Mammary epithelial cell (primary cell): ENCODE measurements at regions of chr1 and their contacts with region 1.

Region 1: DNA sequence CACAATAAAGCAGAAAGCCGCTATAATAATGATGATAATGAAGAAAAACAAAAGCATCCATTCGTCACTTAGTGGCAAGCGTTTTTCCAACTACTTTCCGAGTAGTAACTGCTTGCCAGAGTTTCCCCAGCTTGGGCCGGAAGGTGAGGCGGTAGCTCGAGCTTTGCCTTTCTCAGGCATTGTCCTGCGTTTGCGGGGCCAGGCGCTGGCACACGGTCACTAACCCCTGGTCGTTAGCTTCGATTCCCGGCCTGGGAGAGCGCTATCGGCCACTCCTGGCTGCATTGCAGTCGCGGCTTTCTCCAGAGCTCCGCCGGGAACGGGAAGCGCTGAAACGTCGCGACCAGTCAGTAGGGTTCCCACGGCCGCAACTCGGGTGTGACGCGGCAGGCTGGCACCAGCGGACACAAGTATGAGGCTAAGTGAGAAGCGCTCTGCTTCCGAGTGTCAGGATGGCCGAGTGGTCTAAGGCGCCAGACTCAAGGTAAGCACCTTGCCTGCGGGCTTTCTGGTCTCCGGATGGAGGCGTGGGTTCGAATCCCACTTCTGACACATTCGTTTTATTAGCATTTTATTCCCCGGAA is 14.6 kb upstream of the ZNF692 start:
- DNase-seq: peak; percentile 95
- H3K4me3 ChIP-seq: peak overlapping the region; percentile 66 to 83 (median 73)
- H3K27ac ChIP-seq: peak overlapping the region; percentile 75
- H3K4me1 ChIP-seq: peaks cover 3% of the 10 kb centered on the region
- H3K27me3 ChIP-seq: no peaks in the 10 kb centered on the region
- CTCF ChIP-seq: peak in 1 of 2 donors; percentile 14

Region 2: DNA sequence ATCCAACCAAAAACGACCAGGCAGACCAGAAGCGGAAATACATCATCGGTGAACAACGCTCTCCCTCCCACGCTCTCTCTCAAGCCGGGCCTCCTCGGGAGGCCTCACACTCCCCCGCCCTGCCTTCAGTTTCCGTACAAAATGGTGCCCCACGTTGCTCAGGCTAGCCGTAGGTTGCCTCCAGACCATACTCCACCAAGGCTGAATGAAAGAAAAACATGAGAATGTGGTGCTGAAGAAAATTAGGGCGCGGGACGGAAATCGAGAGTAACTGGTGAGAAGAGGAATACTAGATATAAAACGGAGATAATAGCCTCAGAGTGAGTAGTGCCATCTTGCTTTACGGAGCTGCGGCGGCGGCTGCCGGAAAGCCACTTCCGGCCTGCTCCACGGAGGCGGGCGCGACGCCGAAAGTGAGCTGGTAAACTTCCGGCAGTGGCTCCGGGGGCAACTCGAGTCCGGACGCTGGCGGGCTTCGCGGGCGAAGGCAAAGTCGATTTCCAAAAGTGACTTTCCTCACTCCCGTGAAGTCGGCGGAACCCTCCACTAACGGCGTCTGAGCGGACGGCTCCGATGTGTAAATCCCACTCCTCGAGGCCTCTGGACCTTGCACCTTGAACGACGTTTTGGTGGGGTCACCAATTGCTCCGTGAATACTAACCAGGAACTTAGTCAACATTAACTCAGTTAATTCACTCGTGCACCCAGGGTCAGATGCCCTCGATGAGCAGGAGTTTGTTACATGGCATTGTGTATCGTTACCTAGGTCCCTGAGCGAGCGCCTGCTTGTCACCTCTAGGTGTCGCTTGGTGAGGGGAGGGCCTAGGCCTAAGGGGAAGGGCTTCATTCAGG is 47.4 kb before region 1 on chr1 and contains the start of gene SH3BP5L:
- CTCF ChIA-PET with region 1: no interaction called
- dilution Hi-C with region 1: no loop called
- in situ Hi-C with region 1: no loop called
- intact Hi-C with region 1: loop called (anchors 1 kb)
- DNase-seq: peak; percentile 93
- H3K4me3 ChIP-seq: peak within 1 kb of the TSS; percentile 85 to 93 (median 87)
- H3K27ac ChIP-seq: peak within 1 kb of the TSS; percentile 96
- H3K4me1 ChIP-seq: peaks cover 34% of the 10 kb centered on the region
- H3K27me3 ChIP-seq: no peaks in the 10 kb centered on the region
- CTCF ChIP-seq: peak; percentile 55 to 75
- total RNA-seq, gene SH3BP5L: 22.3 to 30.3 TPM

Region 3: DNA sequence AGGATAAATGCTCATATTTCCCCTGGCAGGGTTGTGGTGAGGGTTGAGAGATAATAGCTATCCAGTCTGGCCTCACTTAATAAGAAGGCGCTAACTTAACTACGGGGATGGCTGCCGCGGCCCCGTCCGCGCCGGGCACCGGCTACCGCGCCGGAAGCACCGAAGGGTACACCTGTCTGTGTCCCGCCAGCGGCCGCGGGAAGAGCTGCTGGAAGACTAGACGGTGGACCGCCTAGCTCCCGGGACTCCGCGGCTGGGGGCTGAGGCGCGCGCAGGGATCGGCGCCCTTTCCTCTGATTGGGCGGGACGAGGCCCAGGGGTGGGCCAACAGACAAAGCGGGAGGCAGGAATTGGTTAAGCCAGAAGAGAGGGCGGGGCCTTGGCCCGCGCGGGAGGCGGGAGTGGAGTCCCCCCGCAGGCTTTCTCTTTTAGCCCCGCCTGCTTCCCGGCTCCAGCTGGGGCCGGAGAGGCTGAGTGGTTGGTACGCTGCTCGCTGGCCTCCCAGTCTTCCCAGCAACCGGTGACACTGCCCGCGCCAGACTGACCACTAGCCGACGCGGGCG is 35.6 kb before region 1 on chr1 and contains the start of gene ZNF672:
- CTCF ChIA-PET with region 1: no interaction called
- dilution Hi-C with region 1: no loop called
- in situ Hi-C with region 1: no loop called
- intact Hi-C with region 1: loop called (anchors 1 kb)
- DNase-seq: peak; percentile 97
- H3K4me3 ChIP-seq: peak within 1 kb of the TSS; percentile 76 to 94 (median 89)
- H3K27ac ChIP-seq: peak within 1 kb of the TSS; percentile 87
- H3K4me1 ChIP-seq: peaks cover 31% of the 10 kb centered on the region
- H3K27me3 ChIP-seq: no peaks in the 10 kb centered on the region
- CTCF ChIP-seq: no peak
- total RNA-seq, gene ZNF672: 20.5 to 22.5 TPM